Astrocyte of the cerebellum (primary cell): ENCODE measurements at regions of chr5 and their contacts with region 1.

Region 1: DNA sequence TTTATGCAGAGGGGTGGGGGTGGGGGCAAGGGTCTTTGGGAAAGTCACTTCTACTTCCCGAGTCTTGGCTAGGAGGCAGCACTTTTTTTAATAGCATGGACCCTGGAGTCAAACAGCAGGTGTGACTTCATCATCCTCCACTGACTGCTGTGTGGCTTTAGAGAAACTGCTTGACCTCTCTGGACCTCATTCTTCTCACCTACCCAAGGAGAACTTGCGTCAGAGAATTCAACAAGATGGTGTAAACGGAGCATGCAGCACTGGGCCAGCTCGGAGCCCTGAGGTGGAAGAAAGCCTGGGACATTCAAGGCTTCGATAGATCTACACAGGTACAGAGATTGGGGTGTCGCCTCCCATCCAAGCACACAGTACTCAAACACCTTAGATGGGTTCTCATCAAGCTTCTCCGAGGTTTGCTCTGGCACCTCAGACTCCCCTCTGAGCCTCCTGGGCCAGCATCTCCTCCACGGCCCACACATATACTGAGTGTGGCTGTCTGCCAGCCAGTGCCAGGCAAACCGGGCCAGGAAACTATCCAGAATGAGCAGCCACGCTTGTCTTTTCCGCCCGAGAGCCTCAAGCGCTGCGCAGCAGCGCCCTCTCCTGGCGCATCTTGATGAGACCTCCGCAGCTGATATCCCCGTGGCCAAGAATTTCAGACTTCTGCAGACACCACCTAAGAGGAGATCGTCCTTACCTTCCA is 4.6 kb upstream of the SLC25A48 start:
- DNase-seq: peak; percentile 20
- H3K4me3 ChIP-seq: no peak overlapping the region
- CTCF ChIP-seq: peak; percentile 86

Region 2: GRCh38 chr5:135310328-135310989 is 519.4 kb before region 1 on chr5:
- in situ Hi-C with region 1: no loop called
- DNase-seq: no peak
- H3K4me3 ChIP-seq: no peak overlapping the region
- CTCF ChIP-seq: no peak

Region 3: GRCh38 chr5:135560858-135561257 is 269.0 kb before region 1 on chr5:
- in situ Hi-C with region 1: loop called (anchors 25 kb)
- DNase-seq: peak; percentile 68
- H3K4me3 ChIP-seq: no peak overlapping the region
- CTCF ChIP-seq: peak; percentile 89

Region 4: DNA sequence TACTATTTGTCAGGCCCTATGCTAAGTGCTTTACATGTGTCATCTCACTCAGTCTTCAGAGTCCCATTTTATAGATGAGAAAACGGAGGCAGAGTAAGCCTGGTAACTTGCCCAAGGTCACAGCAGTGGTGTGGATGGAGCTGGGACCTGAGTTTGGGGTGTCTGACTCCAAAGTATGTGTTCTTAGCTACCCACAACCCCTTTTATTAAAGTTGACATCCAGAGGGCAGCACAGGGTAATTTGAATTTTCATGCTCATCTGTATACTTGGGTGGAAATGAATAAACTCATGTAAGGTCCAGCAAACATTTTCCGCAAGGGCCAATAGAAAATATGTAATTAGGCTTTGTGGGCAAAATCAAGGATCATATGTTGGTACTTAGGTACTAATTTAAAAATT is 88.8 kb before region 1 on chr5:
- in situ Hi-C with region 1: loop called (anchors 10 kb)
- DNase-seq: no peak
- H3K4me3 ChIP-seq: no peak overlapping the region
- CTCF ChIP-seq: no peak